CD8-positive, alpha-beta T cell (primary cell): ENCODE measurements at regions of chr6 and their contacts with region 1.

Region 1: DNA sequence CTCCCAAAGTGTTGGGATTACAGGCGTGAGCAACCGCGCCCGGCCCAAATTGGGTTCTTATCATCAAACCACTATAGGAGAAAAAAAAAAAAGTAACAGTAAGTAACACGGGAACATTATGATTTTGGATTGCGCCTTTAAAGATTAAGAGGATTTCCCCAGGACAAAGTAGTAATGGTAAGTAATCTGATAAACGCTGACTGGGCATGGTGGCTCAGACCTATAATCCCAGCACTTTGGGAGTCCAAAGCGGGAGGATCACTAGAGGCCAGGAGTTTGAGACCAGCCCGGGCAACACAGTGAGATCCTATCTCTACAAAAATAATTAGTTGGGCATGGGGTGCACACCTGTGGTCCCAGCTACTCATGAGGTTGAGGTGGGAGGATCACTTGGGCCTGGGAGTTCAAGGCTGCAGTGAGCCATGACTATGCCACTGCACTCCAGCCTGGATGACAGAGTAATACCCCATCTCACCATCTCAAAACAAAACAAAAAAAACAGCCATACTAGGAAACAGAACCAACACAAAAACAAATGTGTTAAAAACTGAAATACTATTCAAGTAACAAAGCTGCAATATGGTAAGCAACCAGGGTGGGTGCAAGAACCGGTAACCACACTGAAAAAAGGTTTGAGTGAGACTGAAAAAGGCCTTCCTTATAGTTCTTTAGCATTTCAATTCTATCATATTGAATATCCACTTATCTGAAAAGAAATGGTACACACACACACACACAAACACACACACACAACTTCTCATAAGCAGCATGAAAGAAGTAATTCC is 8.2 kb downstream of the C6orf62 start:
- DNase-seq: no peak
- ATAC-seq: peak; percentile 28
- H3K4me3 ChIP-seq: no peak overlapping the region
- H3K4me3 Mint-ChIP-seq: peak overlapping the region; percentile 19
- H3K27ac ChIP-seq: no peak overlapping the region
- H3K27ac Mint-ChIP-seq: peak overlapping the region; percentile 79
- H3K4me1 ChIP-seq: peaks cover 54% of the 10 kb centered on the region
- H3K4me1 Mint-ChIP-seq: peaks cover 60% of the 10 kb centered on the region
- H3K27me3 ChIP-seq: no peaks in the 10 kb centered on the region
- H3K27me3 Mint-ChIP-seq: no peaks in the 10 kb centered on the region
- CTCF ChIP-seq: no peak

Region 2: GRCh38 chr6:23977706-23978105 is 733.0 kb before region 1 on chr6:
- CTCF ChIA-PET with region 1: no interaction called
- POLR2A ChIA-PET with region 1: no interaction called
- intact Hi-C with region 1: no loop called
- DNase-seq: no peak
- ATAC-seq: no peak
- H3K4me3 ChIP-seq: no peak overlapping the region
- H3K4me3 Mint-ChIP-seq: no peak overlapping the region
- H3K27ac ChIP-seq: no peak overlapping the region
- H3K27ac Mint-ChIP-seq: no peak overlapping the region
- H3K4me1 ChIP-seq: no peaks in the 10 kb centered on the region
- H3K4me1 Mint-ChIP-seq: no peaks in the 10 kb centered on the region
- H3K27me3 ChIP-seq: no peaks in the 10 kb centered on the region
- H3K27me3 Mint-ChIP-seq: no peaks in the 10 kb centered on the region
- CTCF ChIP-seq: no peak

Region 3: DNA sequence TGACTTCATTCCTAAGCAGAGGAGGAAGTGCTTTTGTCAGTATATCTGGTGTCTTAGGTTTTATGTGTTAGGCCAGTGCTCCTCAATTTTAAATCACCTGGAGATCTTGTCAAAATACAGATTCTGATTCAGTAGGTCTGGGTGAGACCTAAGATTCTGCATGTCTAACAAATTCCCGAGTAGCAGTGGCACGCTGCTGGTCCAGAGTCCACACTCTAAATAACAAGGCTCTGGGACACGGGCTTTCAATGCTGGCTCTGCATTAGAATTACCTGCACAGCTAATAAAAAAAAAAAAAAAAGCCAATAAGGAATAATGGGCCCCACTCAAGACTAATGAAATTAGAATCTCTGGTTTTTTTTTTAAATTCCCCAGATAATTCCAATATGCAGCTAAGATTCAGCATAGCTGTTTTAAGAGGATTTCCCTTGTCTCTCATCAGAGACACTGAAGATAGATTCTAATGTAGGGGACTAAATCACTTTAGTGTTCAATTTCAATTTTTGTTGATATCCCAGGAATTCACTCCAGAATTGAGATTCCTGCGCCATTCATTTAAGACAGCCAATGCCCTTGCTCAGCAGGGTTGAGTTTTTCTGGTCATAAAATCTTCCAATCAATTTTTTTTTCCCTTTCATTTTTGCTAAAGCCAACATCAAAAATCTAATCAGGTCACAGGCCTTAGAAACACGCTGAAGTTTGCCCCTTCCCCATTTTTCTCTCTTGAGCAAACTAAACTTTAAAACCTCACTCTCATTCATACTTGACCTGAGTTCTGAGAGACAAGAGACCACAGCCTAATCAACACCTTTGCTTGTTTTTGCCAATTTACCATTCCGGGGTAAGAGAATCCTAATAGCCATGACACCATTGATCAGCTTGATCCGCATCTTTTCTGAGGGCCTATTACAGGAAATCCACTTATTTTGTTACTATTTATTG is 46.4 kb before region 1 on chr6:
- CTCF ChIA-PET with region 1: no interaction called
- POLR2A ChIA-PET with region 1: no interaction called
- intact Hi-C with region 1: no loop called
- DNase-seq: no peak
- ATAC-seq: no peak
- H3K4me3 ChIP-seq: no peak overlapping the region
- H3K4me3 Mint-ChIP-seq: peak overlapping the region; percentile 100
- H3K27ac ChIP-seq: no peak overlapping the region
- H3K27ac Mint-ChIP-seq: peak overlapping the region; percentile 98
- H3K4me1 ChIP-seq: peaks cover 45% of the 10 kb centered on the region
- H3K4me1 Mint-ChIP-seq: peaks cover 73% of the 10 kb centered on the region
- H3K27me3 ChIP-seq: no peaks in the 10 kb centered on the region
- H3K27me3 Mint-ChIP-seq: no peaks in the 10 kb centered on the region
- CTCF ChIP-seq: no peak

Region 4: GRCh38 chr6:24827162-24827561 is 116.5 kb after region 1 on chr6:
- CTCF ChIA-PET with region 1: no interaction called
- POLR2A ChIA-PET with region 1: no interaction called
- intact Hi-C with region 1: loop called in 1 of 2 experiments (anchors 5 kb)
- DNase-seq: no peak
- ATAC-seq: no peak
- H3K4me3 ChIP-seq: no peak overlapping the region
- H3K4me3 Mint-ChIP-seq: no peak overlapping the region
- H3K27ac ChIP-seq: peak overlapping the region in 1 of 2 experiments; percentile 11
- H3K27ac Mint-ChIP-seq: peak overlapping the region; percentile 67
- H3K4me1 ChIP-seq: no peaks in the 10 kb centered on the region
- H3K4me1 Mint-ChIP-seq: peaks cover 33% of the 10 kb centered on the region
- H3K27me3 ChIP-seq: no peaks in the 10 kb centered on the region
- H3K27me3 Mint-ChIP-seq: no peaks in the 10 kb centered on the region
- CTCF ChIP-seq: no peak